ENCODE measurements at regions of chr16 and their contacts with region 1.

Region 1: GRCh38 chr16:19886073-19886941 is 1.7 kb upstream of the GPRC5B start:
- DNase-seq: peak; percentile 60 to 79 (median 65)
- H3K4me3 ChIP-seq: peak overlapping the region; percentile 28
- H3K4me3 Mint-ChIP-seq: peak overlapping the region; percentile 79 to 96 (median 84)
- H3K27ac ChIP-seq: no peak overlapping the region
- H3K27ac Mint-ChIP-seq: peak overlapping the region in 6 of 8 donors; percentile 15 to 67 (median 26)
- H3K4me1 ChIP-seq: peaks cover 24% of the 10 kb centered on the region
- H3K4me1 Mint-ChIP-seq: peaks cover 20 to 36% (median 25%) of the 10 kb centered on the region in 3 donors
- H3K27me3 ChIP-seq: peaks cover 23% of the 10 kb centered on the region
- H3K27me3 Mint-ChIP-seq: peaks cover 24 to 34% of the 10 kb centered on the region in 2 donors

Region 2: DNA sequence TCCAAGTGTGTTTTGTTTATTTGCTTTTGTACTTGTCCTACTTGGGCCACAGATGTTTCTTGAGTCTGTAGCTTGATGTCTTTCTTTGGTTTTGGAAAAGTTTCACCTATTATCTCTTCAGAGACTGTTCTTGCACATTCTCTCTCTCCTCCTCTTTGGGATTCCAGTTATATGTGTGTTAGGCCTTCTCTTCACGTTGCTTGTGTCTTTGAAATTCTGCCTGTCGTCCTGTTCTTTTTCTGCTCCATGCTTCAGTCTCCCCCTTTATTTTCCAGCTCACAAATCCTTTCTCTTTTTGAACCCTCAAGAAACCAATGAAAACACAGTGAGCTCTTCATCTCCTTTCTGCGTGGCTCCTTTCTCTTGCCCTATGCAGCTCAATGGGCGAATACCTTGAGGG is 322.9 kb before region 1 on chr16:
- CTCF ChIA-PET with region 1: interaction called, 14 read pairs
- POLR2A ChIA-PET with region 1: no interaction called
- DNase-seq: no peak
- H3K4me3 ChIP-seq: no peak overlapping the region
- H3K4me3 Mint-ChIP-seq: no peak overlapping the region
- H3K27ac ChIP-seq: no peak overlapping the region
- H3K27ac Mint-ChIP-seq: no peak overlapping the region
- H3K4me1 ChIP-seq: no peaks in the 10 kb centered on the region
- H3K4me1 Mint-ChIP-seq: peaks cover 4 to 16% (median 6%) of the 10 kb centered on the region in 3 donors
- H3K27me3 ChIP-seq: no peaks in the 10 kb centered on the region
- H3K27me3 Mint-ChIP-seq: peaks cover 0 to 2% of the 10 kb centered on the region in 2 donors

Region 3: GRCh38 chr16:19601083-19601976 is 285.0 kb before region 1 on chr16:
- CTCF ChIA-PET with region 1: interaction called, 53 read pairs
- POLR2A ChIA-PET with region 1: no interaction called
- DNase-seq: peak in 3 of 5 donors; percentile 6 to 26 (median 18)
- H3K4me3 ChIP-seq: no peak overlapping the region
- H3K4me3 Mint-ChIP-seq: no peak overlapping the region
- H3K27ac ChIP-seq: no peak overlapping the region
- H3K27ac Mint-ChIP-seq: peak overlapping the region in 1 of 8 donors; percentile 67
- H3K4me1 ChIP-seq: no peaks in the 10 kb centered on the region
- H3K4me1 Mint-ChIP-seq: no peaks in the 10 kb centered on the region
- H3K27me3 ChIP-seq: no peaks in the 10 kb centered on the region
- H3K27me3 Mint-ChIP-seq: no peaks in the 10 kb centered on the region